ENCODE measurements at regions of chr4 and their contacts with region 1.

Region 1: GRCh38 chr4:10582059-10582686 is 102.4 kb downstream of the CLNK start:
- DNase-seq: peak in 2 of 3 donors; percentile 24 to 28
- H3K4me3 ChIP-seq: no peak overlapping the region
- H3K4me3 Mint-ChIP-seq: no peak overlapping the region
- H3K27ac ChIP-seq: no peak overlapping the region
- H3K27ac Mint-ChIP-seq: no peak overlapping the region
- H3K4me1 ChIP-seq: peaks cover 7 to 11% of the 10 kb centered on the region in 2 donors
- H3K4me1 Mint-ChIP-seq: peaks cover 15% of the 10 kb centered on the region
- H3K27me3 ChIP-seq: no peaks in the 10 kb centered on the region
- H3K27me3 Mint-ChIP-seq: peaks cover 0 to 6% (median 0%) of the 10 kb centered on the region in 3 donors
- CTCF ChIP-seq: peak; percentile 86

Region 2: DNA sequence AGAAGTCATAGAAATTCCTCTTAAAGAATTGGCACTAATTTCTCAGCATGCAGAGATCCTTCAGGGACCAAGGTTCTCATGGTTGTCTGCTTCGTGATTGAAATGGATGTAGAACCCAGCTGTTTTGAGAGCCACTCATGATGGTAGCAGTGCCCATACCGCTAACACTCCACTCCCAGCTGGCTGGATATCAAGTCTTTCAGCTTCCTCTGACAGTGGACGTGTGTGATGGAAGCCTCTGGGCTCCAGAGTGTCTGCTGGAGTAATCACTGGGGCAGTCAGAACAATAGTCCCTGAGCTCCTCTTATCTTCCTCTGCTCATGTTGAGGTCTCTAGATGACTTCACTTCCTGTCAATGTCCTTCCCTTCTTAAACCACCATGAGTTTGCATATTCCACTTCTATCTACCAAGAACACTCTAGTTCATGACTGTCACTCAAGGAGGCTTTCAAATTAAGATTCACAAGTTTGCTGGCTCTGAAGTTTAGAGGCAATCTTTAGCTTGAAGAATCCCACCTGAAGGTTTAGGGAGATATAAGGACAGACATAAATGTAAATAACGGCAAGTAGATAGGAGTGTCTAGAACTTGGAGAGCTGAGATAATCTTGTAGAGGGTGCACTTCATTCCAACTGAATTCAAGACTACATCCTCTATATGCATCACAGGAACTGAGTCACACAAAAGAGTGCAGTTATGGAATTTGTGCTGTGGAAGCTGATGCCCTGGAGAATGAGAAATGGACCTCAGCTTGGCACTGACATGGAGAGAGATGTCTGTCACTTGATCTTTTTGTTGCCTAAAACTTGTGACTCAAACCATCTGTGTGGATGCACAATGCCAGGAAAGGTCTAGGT is 401.0 kb before region 1 on chr4:
- intact Hi-C with region 1: no loop called
- DNase-seq: peak; percentile 74 to 89 (median 80)
- H3K4me3 ChIP-seq: peak overlapping the region in 1 of 3 experiments; percentile 32
- H3K4me3 Mint-ChIP-seq: peak overlapping the region; percentile 20 to 83
- H3K27ac ChIP-seq: peak overlapping the region; percentile 70 to 86
- H3K27ac Mint-ChIP-seq: peak overlapping the region; percentile 86 to 97 (median 95)
- H3K4me1 ChIP-seq: peaks cover 49% of the 10 kb centered on the region in 2 donors
- H3K4me1 Mint-ChIP-seq: peaks cover 56% of the 10 kb centered on the region
- H3K27me3 ChIP-seq: no peaks in the 10 kb centered on the region
- H3K27me3 Mint-ChIP-seq: peaks cover 0 to 6% (median 4%) of the 10 kb centered on the region in 3 donors
- CTCF ChIP-seq: no peak

Region 3: GRCh38 chr4:10354225-10354624 is 227.9 kb before region 1 on chr4:
- intact Hi-C with region 1: no loop called
- DNase-seq: no peak
- H3K4me3 ChIP-seq: no peak overlapping the region
- H3K4me3 Mint-ChIP-seq: no peak overlapping the region
- H3K27ac ChIP-seq: no peak overlapping the region
- H3K27ac Mint-ChIP-seq: no peak overlapping the region
- H3K4me1 ChIP-seq: no peaks in the 10 kb centered on the region
- H3K4me1 Mint-ChIP-seq: no peaks in the 10 kb centered on the region
- H3K27me3 ChIP-seq: peaks cover 0 to 2% of the 10 kb centered on the region in 2 donors
- H3K27me3 Mint-ChIP-seq: peaks cover 2 to 10% (median 3%) of the 10 kb centered on the region in 3 donors
- CTCF ChIP-seq: no peak

Region 4: GRCh38 chr4:11428899-11429698 is 846.9 kb after region 1 on chr4:
- intact Hi-C with region 1: loop called in 1 of 2 experiments (anchors 10 kb)
- DNase-seq: peak; percentile 45 to 60 (median 59)
- H3K4me3 ChIP-seq: peak overlapping the region; percentile 16 to 80 (median 34)
- H3K4me3 Mint-ChIP-seq: peak overlapping the region; percentile 81 to 95
- H3K27ac ChIP-seq: no peak overlapping the region
- H3K27ac Mint-ChIP-seq: peak overlapping the region in 2 of 7 donors; percentile 10 to 68
- H3K4me1 ChIP-seq: peaks cover 20 to 28% of the 10 kb centered on the region in 2 donors
- H3K4me1 Mint-ChIP-seq: peaks cover 21% of the 10 kb centered on the region
- H3K27me3 ChIP-seq: peaks cover 43 to 52% of the 10 kb centered on the region in 2 donors
- H3K27me3 Mint-ChIP-seq: peaks cover 42 to 62% (median 46%) of the 10 kb centered on the region in 3 donors
- CTCF ChIP-seq: peak; percentile 73

Region 5: DNA sequence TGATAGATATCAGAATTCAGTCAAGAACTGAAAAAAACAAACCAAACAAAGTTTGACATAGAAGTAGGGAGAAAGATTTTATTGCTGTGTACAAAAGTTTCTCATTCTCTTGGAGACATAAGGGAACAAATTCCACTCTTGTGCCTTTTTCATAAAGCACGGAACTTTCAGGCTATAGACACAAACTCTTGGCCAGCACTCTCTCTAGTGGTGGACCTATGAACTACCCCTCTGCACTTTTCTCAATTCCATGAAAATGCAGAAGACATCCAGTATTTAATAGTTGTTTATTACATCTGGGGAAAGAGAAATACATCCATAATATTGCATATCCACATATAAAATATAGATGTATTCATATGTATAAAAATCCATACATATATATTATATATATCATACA is 1138.1 kb after region 1 on chr4:
- intact Hi-C with region 1: loop called in 1 of 2 experiments (anchors 10 kb)
- DNase-seq: peak in 2 of 3 donors; percentile 3 to 7
- H3K4me3 ChIP-seq: no peak overlapping the region
- H3K4me3 Mint-ChIP-seq: no peak overlapping the region
- H3K27ac ChIP-seq: no peak overlapping the region
- H3K27ac Mint-ChIP-seq: no peak overlapping the region
- H3K4me1 ChIP-seq: no peaks in the 10 kb centered on the region
- H3K4me1 Mint-ChIP-seq: no peaks in the 10 kb centered on the region
- H3K27me3 ChIP-seq: no peaks in the 10 kb centered on the region
- H3K27me3 Mint-ChIP-seq: no peaks in the 10 kb centered on the region
- CTCF ChIP-seq: peak; percentile 65